Activated naive CD4-positive, alpha-beta T cell treated with anti-CD3 and anti-CD28 coated beads for 36 hours (primary cell): ENCODE measurements at regions of chr4 and their contacts with region 1.

Region 1: GRCh38 chr4:153450544-153450917 is 15.6 kb upstream of the TMEM131L start:
- DNase-seq: peak; percentile 42
- H3K4me3 Mint-ChIP-seq: peak overlapping the region; percentile 36
- H3K27ac Mint-ChIP-seq: peak overlapping the region; percentile 90
- H3K4me1 Mint-ChIP-seq: peaks cover 25% of the 10 kb centered on the region
- H3K27me3 Mint-ChIP-seq: no peaks in the 10 kb centered on the region

Region 2: GRCh38 chr4:152850377-152850776 is 600.2 kb before region 1 on chr4:
- CTCF ChIA-PET with region 1: no interaction called
- intact Hi-C with region 1: no loop called
- DNase-seq: peak; percentile 74
- H3K4me3 Mint-ChIP-seq: no peak overlapping the region
- H3K27ac Mint-ChIP-seq: no peak overlapping the region
- H3K4me1 Mint-ChIP-seq: peaks cover 16% of the 10 kb centered on the region
- H3K27me3 Mint-ChIP-seq: no peaks in the 10 kb centered on the region

Region 3: DNA sequence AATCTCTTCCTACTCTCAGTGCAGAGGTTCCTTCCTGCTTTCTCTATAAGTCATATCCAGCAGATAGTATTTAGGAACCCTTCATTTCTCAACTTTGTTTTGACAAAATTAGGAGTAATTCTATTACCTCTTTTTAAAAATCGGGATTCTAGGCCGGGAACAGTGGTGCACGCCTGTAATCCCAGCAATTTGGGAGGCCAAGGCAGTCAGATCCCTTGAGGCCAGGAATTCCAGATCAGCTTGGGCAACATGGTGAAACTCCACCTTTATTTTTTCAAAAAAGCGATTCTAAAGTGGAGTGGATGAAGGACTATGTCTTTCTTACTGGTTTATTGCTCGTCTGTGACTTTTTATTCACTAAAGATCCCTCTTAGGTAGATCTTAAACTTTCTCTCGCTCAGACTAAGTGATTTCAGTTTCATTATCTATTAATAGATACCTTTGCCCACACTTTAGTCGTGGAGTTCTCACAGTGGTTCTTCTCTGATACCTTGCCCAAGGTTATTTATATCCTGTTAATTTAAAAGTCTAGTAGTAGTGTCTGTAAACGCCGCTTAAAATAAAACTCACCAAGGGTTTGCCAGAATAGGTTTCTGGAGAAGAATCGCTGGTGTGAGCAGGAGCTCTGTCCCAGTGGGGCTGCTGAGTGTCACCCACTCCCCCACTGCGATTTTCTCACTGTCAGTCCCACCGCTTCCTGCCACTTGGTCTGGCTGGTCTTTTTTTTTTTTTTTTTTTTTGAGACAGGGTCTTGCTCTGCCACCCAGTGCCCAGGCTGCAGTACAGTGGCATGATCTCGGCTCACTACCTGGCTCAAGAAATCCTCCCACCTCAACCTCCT is 11.4 kb before region 1 on chr4:
- CTCF ChIA-PET with region 1: interaction called, 5 read pairs
- intact Hi-C with region 1: loop called (anchors 1 kb)
- DNase-seq: peak; percentile 44
- H3K4me3 Mint-ChIP-seq: peak overlapping the region; percentile 72
- H3K27ac Mint-ChIP-seq: peak overlapping the region; percentile 88
- H3K4me1 Mint-ChIP-seq: peaks cover 57% of the 10 kb centered on the region
- H3K27me3 Mint-ChIP-seq: no peaks in the 10 kb centered on the region